B cell (primary cell): ENCODE measurements at regions of chr3 and their contacts with region 1.

Region 1: GRCh38 chr3:15399970-15400369 is 27.4 kb downstream of the METTL6 start:
- DNase-seq: no peak
- ATAC-seq: no peak
- H3K4me3 ChIP-seq: no peak overlapping the region
- H3K4me3 Mint-ChIP-seq: no peak overlapping the region
- H3K27ac ChIP-seq: no peak overlapping the region
- H3K27ac Mint-ChIP-seq: no peak overlapping the region
- H3K4me1 ChIP-seq: peaks cover 24 to 31% of the 10 kb centered on the region in 2 donors
- H3K4me1 Mint-ChIP-seq: peaks cover 39% of the 10 kb centered on the region
- H3K27me3 ChIP-seq: no peaks in the 10 kb centered on the region
- H3K27me3 Mint-ChIP-seq: no peaks in the 10 kb centered on the region
- CTCF ChIP-seq: no peak

Region 2: GRCh38 chr3:15361494-15362212 is 38.3 kb before region 1 on chr3:
- CTCF ChIA-PET with region 1: interaction called, 11 read pairs
- POLR2A ChIA-PET with region 1: no interaction called
- intact Hi-C with region 1: loop called (anchors 5 kb)
- DNase-seq: peak; percentile 64
- ATAC-seq: peak; percentile 66
- H3K4me3 ChIP-seq: peak overlapping the region; percentile 5 to 54 (median 19)
- H3K4me3 Mint-ChIP-seq: peak overlapping the region; percentile 76
- H3K27ac ChIP-seq: peak overlapping the region; percentile 95 to 96
- H3K27ac Mint-ChIP-seq: peak overlapping the region; percentile 80
- H3K4me1 ChIP-seq: peaks cover 48 to 63% of the 10 kb centered on the region in 2 donors
- H3K4me1 Mint-ChIP-seq: peaks cover 59% of the 10 kb centered on the region
- H3K27me3 ChIP-seq: no peaks in the 10 kb centered on the region
- H3K27me3 Mint-ChIP-seq: no peaks in the 10 kb centered on the region
- CTCF ChIP-seq: no peak

Region 3: DNA sequence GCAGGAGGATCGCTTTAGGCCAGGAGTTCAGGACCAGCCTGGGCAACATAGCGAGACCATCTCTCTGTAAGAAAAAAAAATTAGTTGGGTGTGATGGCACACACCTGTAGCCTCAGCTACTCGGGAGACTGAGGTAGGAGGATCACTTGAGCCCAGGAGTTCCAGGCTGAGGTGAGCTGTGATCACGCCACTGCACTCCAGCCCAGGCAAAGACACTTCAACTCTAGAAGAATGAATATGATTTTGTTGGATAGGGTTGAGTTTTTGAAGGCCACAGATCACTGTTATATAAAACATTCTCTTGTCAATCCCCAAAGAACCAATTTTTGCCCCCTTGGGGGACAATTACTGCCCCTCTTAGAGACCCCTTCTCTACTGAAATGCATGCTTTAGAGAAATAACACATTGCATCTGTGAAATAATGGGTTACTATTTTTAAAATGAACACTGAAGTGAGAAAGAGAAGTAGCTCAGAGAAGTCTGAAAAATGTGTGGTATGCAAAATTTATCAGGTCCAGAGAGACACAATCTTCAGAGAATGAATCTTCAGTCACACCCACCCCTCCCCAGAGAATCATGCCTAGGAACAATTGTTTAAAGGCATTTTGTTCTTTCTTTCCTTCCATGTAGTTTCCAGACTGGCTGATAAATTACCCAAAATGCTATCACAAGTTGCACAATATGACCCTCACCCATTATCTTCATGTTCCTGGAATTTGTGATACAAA is 15.3 kb before region 1 on chr3:
- CTCF ChIA-PET with region 1: interaction called, 31 read pairs
- POLR2A ChIA-PET with region 1: no interaction called
- intact Hi-C with region 1: loop called (anchors 2 kb)
- DNase-seq: peak; percentile 70
- ATAC-seq: peak; percentile 89
- H3K4me3 ChIP-seq: peak overlapping the region in 3 of 5 experiments; percentile 18 to 32 (median 27)
- H3K4me3 Mint-ChIP-seq: peak overlapping the region; percentile 57
- H3K27ac ChIP-seq: peak overlapping the region; percentile 83 to 85
- H3K27ac Mint-ChIP-seq: peak overlapping the region; percentile 77
- H3K4me1 ChIP-seq: peaks cover 73 to 88% of the 10 kb centered on the region in 2 donors
- H3K4me1 Mint-ChIP-seq: peaks cover 75% of the 10 kb centered on the region
- H3K27me3 ChIP-seq: no peaks in the 10 kb centered on the region
- H3K27me3 Mint-ChIP-seq: no peaks in the 10 kb centered on the region
- CTCF ChIP-seq: no peak